GM10248 (cell line): ENCODE measurements at regions of chr18 and their contacts with region 1.

Region 1: DNA sequence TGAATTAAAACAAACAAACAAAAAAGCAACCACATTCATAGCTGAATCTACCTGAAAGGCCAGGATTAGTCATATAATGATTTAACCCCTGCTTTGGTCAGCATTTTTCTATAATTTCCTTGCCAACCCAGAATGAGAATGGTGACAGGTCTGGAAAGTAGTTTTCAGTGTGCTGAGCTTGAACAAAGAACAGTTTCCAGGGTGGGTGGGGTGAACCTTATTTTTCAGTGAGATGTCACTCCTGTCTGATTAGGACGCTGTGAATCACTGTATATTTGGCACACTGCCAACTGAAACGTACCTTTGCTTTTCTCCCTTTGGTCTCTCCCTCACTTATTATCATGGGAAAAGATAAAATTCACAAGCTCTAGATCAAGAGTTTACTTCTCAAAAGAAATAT is 35.0 kb upstream of the DSC1 start:
- DNase-seq: peak; percentile 11
- CTCF ChIP-seq: no peak

Region 2: DNA sequence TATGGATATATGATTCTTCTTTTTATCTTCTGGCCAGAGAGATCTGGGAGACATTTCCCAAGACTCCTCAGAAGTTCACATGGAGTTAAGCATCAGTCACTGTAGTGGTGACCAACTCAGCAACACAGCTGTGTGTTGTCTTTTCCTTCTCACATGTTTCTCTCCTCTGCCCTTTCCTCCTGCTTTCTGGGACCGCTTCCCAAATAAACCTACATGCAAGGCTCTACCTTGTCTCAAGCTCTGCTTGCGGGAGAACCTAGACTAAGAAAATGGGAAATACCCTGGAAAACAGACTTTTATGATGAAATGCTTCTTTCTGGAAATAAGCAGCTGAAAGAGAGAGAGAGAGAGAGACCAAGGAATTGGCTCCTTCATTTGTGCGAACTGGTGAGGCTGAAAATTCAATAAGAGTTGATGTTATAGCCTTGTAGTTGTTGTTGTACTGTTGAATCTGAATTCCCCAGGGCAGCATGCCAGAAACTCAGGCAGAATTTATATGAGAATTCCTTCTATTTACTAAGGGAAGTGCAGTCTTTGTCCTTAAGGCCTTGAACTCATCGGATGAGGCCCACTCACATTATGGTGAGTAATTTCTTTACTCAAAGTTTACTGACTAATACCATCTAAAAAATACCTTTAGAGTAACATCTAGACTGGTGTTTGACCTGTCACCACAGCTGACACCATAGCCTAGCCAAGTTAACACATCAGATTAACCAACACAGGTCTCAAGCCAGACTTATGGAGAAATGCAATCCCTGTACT is 12.3 kb before region 1 on chr18:
- CTCF ChIA-PET with region 1: interaction called, 11 read pairs
- POLR2A ChIA-PET with region 1: no interaction called
- DNase-seq: no peak
- CTCF ChIP-seq: no peak

Region 3: DNA sequence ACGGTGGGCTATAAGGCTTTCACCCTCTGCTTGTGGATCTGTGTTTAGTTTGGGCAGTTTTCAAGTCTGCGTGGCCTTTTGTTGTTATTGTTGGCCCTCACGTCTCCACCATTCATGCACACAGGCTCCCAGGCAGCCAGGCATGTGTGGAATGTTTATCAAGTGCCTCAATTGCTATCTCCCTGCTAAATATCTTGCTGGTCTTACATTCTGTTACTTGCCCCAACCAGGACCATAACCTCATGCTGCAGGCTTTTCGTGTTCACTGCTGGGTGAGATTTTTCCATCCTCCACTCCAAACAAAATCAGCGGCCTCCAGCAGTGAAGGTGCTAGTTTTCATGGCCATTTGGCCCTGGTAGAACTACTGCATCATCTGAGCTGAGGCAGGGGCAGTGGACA is 28.0 kb after region 1 on chr18:
- CTCF ChIA-PET with region 1: no interaction called
- POLR2A ChIA-PET with region 1: no interaction called
- DNase-seq: no peak
- CTCF ChIP-seq: no peak

Region 4: GRCh38 chr18:31343454-31343853 is 145.8 kb after region 1 on chr18:
- CTCF ChIA-PET with region 1: no interaction called
- POLR2A ChIA-PET with region 1: no interaction called
- DNase-seq: no peak
- CTCF ChIP-seq: no peak